ENCODE measurements at regions of chr1 and their contacts with region 1.

Region 1: DNA sequence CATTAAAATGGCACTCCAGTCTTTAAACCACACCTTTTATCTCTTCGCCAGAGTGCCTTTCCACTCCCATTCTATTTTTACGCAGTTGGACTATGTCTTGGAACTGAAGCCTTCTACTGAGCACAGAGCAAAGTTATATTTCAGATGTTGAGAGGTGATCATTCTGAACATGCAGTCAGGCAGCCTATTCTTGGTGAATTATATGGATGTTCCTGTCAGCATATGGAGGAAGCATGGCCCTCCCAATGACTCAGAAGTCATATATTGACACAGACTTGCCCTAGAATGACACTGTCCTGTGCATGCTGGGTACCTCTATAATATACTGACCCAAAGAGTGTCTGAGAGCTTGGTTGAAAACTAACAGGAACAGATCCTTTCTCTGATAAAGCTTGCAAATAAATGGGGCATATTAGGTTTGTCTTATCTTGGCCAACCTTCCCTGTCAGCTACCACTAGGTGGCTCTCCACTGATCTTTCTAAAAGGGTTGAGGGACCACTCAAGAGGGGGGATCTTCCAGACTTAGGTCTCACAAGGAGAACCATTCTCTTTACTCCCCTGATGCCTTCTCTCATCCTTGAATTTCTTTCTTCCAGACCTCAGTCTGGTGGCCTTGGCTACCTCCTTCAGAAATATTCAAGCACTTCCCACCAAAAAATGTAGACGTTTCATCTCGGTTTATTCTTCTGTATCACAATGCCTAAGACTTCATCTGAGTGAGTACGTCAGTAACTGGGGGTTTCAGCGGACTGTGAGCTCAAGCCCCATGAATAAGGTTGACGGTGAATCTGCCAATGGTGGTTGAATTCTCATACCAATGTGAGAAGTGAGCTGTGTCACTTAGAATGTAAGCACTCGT is 11.8 kb upstream of the ALG14 start:
- DNase-seq: peak; percentile 44
- H3K4me3 Mint-ChIP-seq: no peak overlapping the region
- H3K27ac Mint-ChIP-seq: no peak overlapping the region
- H3K4me1 Mint-ChIP-seq: no peaks in the 10 kb centered on the region
- H3K27me3 Mint-ChIP-seq: no peaks in the 10 kb centered on the region
- CTCF ChIP-seq: peak; percentile 66

Region 2: GRCh38 chr1:95049935-95050334 is 34.6 kb before region 1 on chr1:
- CTCF ChIA-PET with region 1: no interaction called
- POLR2A ChIA-PET with region 1: no interaction called
- intact Hi-C with region 1: no loop called
- DNase-seq: no peak
- H3K4me3 Mint-ChIP-seq: no peak overlapping the region
- H3K27ac Mint-ChIP-seq: no peak overlapping the region
- H3K4me1 Mint-ChIP-seq: no peaks in the 10 kb centered on the region
- H3K27me3 Mint-ChIP-seq: no peaks in the 10 kb centered on the region
- CTCF ChIP-seq: no peak

Region 3: GRCh38 chr1:95072532-95073419 is 11.8 kb before region 1 on chr1 and contains the start of gene ALG14:
- CTCF ChIA-PET with region 1: interaction called, 49 read pairs
- POLR2A ChIA-PET with region 1: interaction called, 18 read pairs
- intact Hi-C with region 1: no loop called
- DNase-seq: peak; percentile 94
- H3K4me3 Mint-ChIP-seq: peak within 1 kb of the TSS; percentile 84
- H3K27ac Mint-ChIP-seq: peak within 1 kb of the TSS; percentile 90
- H3K4me1 Mint-ChIP-seq: peaks cover 9% of the 10 kb centered on the region
- H3K27me3 Mint-ChIP-seq: no peaks in the 10 kb centered on the region
- CTCF ChIP-seq: no peak
- total RNA-seq, gene ALG14: 13.0 and 15.5 TPM in 2 replicates

Region 4: GRCh38 chr1:95364546-95364945 is 280.0 kb after region 1 on chr1:
- CTCF ChIA-PET with region 1: no interaction called
- POLR2A ChIA-PET with region 1: no interaction called
- intact Hi-C with region 1: no loop called
- DNase-seq: no peak
- H3K4me3 Mint-ChIP-seq: no peak overlapping the region
- H3K27ac Mint-ChIP-seq: no peak overlapping the region
- H3K4me1 Mint-ChIP-seq: no peaks in the 10 kb centered on the region
- H3K27me3 Mint-ChIP-seq: no peaks in the 10 kb centered on the region
- CTCF ChIP-seq: no peak

Region 5: GRCh38 chr1:95572002-95572401 is 487.5 kb after region 1 on chr1:
- CTCF ChIA-PET with region 1: no interaction called
- POLR2A ChIA-PET with region 1: no interaction called
- intact Hi-C with region 1: no loop called
- DNase-seq: no peak
- H3K4me3 Mint-ChIP-seq: no peak overlapping the region
- H3K27ac Mint-ChIP-seq: no peak overlapping the region
- H3K4me1 Mint-ChIP-seq: no peaks in the 10 kb centered on the region
- H3K27me3 Mint-ChIP-seq: no peaks in the 10 kb centered on the region
- CTCF ChIP-seq: no peak

Measured in MCF 10A (cell line).